ENCODE measurements at regions of chr6 and their contacts with region 1.

Region 1: DNA sequence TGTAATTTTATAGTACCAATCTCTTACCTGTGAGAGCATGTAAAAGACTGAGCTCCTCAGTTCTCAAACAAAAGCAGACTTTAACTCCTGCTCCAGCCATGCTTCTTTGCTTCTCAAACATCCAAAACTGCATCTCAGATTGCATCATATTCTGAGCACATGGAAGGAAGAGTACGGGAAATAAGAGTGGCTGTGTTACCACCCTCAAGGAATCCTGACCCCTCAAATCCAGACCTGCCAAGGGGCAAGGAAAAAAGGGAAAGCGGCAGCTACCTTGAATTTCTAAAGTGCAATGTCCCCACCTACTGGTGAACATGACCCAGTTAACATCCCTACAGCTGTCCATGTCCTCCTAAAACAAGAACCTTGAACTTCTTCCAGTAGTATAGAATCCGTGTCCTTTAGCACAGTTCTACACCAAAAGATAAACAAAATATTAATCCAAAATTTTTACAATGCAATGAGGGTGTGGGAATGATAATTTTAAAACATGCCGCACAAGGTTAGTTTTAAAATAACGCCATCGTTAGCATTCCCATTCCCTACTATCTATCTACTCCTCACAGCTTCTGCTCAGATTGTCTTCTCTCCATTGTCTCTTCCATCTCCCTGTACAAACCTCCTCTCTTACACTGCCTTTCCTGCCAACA is 34.1 kb upstream of the HLA-DQB1 start:
- DNase-seq: peak in 2 of 5 donors; percentile 29 to 41
- ATAC-seq: peak; percentile 42 to 89 (median 70)
- H3K4me3 ChIP-seq: no peak overlapping the region
- H3K27ac ChIP-seq: no peak overlapping the region
- H3K4me1 ChIP-seq: peaks cover 0 to 3% (median 0%) of the 10 kb centered on the region in 12 donors
- H3K27me3 ChIP-seq: peaks cover 0 to 18% (median 8%) of the 10 kb centered on the region in 9 donors
- CTCF ChIP-seq: peak; percentile 27 to 81 (median 66)
- POLR2A ChIP-seq: no peak

Region 2: DNA sequence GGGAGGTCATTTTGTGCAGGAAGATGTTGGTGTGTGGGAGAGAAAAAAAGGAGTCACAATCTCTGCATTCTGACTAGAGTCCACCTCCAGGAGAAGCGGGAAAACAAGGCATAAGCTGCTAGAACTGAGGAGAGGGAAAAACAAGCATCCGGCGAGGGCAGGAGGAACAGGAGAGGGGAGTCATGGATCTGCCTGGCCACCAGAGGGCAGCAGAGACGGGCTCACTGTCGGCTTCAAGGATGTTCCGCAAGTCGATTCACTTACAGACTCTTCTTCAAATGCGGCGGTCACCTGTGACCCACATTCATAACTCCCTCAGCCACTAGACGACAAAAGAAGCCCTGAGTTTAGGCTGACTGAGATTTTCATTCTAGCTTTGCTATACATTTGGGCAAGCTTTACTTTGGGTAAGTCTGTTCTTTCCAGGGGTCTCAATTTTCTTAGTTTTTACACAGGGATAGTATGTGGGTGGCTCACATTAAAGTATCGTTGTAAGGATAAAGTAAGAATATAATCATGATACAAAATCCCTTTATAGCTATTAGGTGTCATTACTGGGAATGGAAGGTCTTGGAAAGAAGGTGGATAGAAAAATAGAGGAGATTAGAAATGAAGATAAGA is 287.0 kb before region 1 on chr6:
- intact Hi-C with region 1: loop called (anchors 2 to 10 kb)
- DNase-seq: peak; percentile 77 to 91 (median 78)
- ATAC-seq: peak in 3 of 4 donors; percentile 69 to 89 (median 85)
- H3K4me3 ChIP-seq: no peak overlapping the region
- H3K27ac ChIP-seq: no peak overlapping the region
- H3K4me1 ChIP-seq: peaks cover 0 to 17% (median 0%) of the 10 kb centered on the region in 12 donors
- H3K27me3 ChIP-seq: peaks cover 0 to 65% (median 11%) of the 10 kb centered on the region in 9 donors
- CTCF ChIP-seq: peak; percentile 88 to 97 (median 94)
- POLR2A ChIP-seq: no peak

Region 3: DNA sequence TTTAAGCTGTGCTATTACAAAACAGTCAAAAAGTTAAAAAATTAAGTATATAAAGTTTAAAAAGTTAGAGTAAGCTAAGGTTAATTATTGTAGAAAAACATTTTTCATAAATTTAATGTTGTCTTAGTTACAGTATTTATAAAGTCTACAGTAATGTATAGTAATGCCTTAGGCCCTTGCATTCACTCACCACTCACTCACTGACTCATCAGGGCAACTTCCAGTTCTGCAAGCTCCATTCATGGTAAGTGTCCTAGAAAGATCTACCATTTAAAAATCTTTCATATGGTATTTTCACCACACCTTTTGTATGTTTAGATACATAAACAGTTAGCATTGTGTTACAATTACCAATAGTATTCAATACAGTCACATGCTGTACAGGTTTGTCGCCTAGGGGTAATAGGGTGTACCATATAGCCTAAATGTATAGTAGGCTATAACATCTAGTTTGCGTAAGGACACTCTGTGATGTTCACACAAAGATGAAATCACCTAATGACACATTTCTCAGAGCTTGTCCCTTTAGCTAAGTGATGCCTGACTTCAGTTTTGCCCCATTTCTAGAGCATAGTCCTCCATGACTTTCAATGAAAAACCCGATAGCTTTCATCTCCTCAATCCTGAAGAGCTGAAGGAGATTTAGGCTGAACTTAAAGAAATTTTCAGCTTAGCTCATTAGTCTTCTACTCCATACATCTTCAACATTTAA is 275.8 kb before region 1 on chr6:
- intact Hi-C with region 1: loop called in 7 of 10 experiments (anchors 5 to 10 kb)
- DNase-seq: no peak
- ATAC-seq: no peak
- H3K4me3 ChIP-seq: no peak overlapping the region
- H3K27ac ChIP-seq: no peak overlapping the region
- H3K4me1 ChIP-seq: no peaks in the 10 kb centered on the region
- H3K27me3 ChIP-seq: peaks cover 0 to 20% (median 0%) of the 10 kb centered on the region in 9 donors
- CTCF ChIP-seq: no peak
- POLR2A ChIP-seq: no peak

Region 4: DNA sequence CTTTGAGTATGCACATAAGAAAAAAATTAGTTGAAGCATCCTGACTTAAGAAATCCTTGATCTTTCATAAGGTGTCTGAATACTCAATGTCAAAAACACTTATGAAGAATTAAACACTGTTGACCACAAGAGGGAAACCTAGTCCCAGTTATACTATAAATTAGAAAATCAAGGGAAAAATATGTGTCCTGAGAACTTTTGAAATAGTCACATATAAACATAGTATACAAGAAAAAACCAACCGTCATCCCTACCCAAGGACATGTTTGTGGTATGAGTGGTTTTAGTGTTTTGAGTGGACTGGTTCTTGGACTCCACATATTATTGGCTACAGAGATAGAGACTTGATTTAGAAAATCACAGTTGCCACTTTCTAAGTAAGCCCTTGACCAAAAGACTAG is 268.5 kb before region 1 on chr6:
- intact Hi-C with region 1: loop called (anchors 1 to 5 kb)
- DNase-seq: no peak
- ATAC-seq: no peak
- H3K4me3 ChIP-seq: no peak overlapping the region
- H3K27ac ChIP-seq: no peak overlapping the region
- H3K4me1 ChIP-seq: peaks cover 0 to 9% (median 0%) of the 10 kb centered on the region in 12 donors
- H3K27me3 ChIP-seq: peaks cover 0 to 14% (median 0%) of the 10 kb centered on the region in 9 donors
- CTCF ChIP-seq: peak; percentile 16 to 66 (median 42)
- POLR2A ChIP-seq: no peak

Region 5: GRCh38 chr6:32807020-32807580 is 106.6 kb after region 1 on chr6:
- intact Hi-C with region 1: no loop called
- DNase-seq: no peak
- ATAC-seq: no peak
- H3K4me3 ChIP-seq: no peak overlapping the region
- H3K27ac ChIP-seq: no peak overlapping the region
- H3K4me1 ChIP-seq: no peaks in the 10 kb centered on the region
- H3K27me3 ChIP-seq: peaks cover 0 to 24% (median 0%) of the 10 kb centered on the region in 9 donors
- CTCF ChIP-seq: no peak
- POLR2A ChIP-seq: no peak